GM12878 (cell line): ENCODE measurements at regions of chr4 and their contacts with region 1.

Region 1: GRCh38 chr4:52038103-52038912 is at the start of gene SGCB:
- DNase-seq: no peak
- ATAC-seq: peak; percentile 95
- H3K4me3 ChIP-seq: peak within 1 kb of the TSS; percentile 86
- H3K27ac ChIP-seq: no peak within 1 kb of the TSS
- H3K4me1 ChIP-seq: peaks cover 5% of the 10 kb centered on the region; the same call in 1 of the 2 replicates
- H3K27me3 ChIP-seq: no peaks in the 10 kb centered on the region; a peak in 1 of 4 replicates
- CTCF ChIP-seq: no peak
- EP300 ChIP-seq: no peak
- POLR2A ChIP-seq: peak; percentile 71
- RAD21 ChIP-seq: no peak
- polyA plus RNA-seq, gene SGCB: 7.1 to 8.1 TPM

Region 2: GRCh38 chr4:52643785-52644244 is 605.5 kb after region 1 on chr4:
- CTCF ChIA-PET with region 1: no interaction called
- POLR2A ChIA-PET with region 1: no interaction called
- RAD21 ChIA-PET with region 1: no interaction called
- SMC1A ChIA-PET with region 1: no interaction called
- in situ Hi-C with region 1: no loop called
- intact Hi-C with region 1: loop called (anchors 10 kb)
- DNase-seq: no peak
- ATAC-seq: peak; percentile 54
- H3K4me3 ChIP-seq: peak overlapping the region; percentile 1; the same call in 1 of the 2 replicates
- H3K27ac ChIP-seq: peak overlapping the region; percentile 61
- H3K4me1 ChIP-seq: peaks cover 52% of the 10 kb centered on the region
- H3K27me3 ChIP-seq: no peaks in the 10 kb centered on the region
- CTCF ChIP-seq: no peak
- EP300 ChIP-seq: no peak
- POLR2A ChIP-seq: no peak
- RAD21 ChIP-seq: no peak